Activated T-helper 2 cell treated with anti-CD3 and anti-CD28 coated beads, Interferon-gamma antibody, Interleukin-2, Interleukin-4, amounts not matched to agents 10 μg/mL and 5 μg/mL and 100 μg/mL, durations not matched to agents 14 hours and 24 hours and 36 hours (primary cell): ENCODE measurements at regions of chr19 and their contacts with region 1.

Region 1: DNA sequence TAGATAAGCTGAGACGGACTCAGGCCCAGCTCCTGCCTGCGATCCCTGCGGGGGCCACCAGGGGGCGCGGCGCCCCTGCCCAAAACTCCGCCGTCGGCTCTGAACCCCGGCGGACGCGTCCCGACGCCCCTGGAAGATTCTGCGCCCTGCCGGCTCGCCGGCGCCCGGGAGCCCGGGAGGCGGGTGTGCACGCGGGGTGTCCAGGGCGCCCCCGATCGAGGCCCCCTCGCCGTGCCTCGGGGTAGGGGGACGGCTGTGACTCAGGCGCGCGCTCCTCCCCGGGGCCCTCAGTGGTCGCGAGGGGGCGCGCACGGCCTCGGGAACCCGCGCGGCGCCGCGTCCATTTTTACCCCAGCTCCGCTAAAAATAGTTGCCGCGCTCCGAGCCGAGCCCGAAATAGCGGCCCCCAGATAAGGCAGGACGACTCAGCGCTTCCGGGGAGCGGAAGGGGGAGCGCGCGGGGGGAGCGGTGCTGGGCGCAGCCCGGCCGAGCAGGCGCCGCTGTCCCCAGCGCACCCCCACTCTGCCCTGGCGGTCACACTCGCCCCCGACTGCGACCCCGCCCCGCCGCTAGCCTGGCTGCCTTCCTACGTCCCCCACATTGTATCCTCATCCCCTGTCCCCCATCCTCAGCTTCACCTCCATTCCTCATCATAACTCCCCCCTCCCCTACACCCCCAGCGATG is 16.0 kb upstream of the ERCC1 start:
- DNase-seq: peak; percentile 78
- H3K4me3 Mint-ChIP-seq: peak overlapping the region; percentile 69
- H3K27ac Mint-ChIP-seq: peak overlapping the region; percentile 67
- H3K4me1 Mint-ChIP-seq: peaks cover 23% of the 10 kb centered on the region
- H3K27me3 Mint-ChIP-seq: peaks cover 2% of the 10 kb centered on the region

Region 2: DNA sequence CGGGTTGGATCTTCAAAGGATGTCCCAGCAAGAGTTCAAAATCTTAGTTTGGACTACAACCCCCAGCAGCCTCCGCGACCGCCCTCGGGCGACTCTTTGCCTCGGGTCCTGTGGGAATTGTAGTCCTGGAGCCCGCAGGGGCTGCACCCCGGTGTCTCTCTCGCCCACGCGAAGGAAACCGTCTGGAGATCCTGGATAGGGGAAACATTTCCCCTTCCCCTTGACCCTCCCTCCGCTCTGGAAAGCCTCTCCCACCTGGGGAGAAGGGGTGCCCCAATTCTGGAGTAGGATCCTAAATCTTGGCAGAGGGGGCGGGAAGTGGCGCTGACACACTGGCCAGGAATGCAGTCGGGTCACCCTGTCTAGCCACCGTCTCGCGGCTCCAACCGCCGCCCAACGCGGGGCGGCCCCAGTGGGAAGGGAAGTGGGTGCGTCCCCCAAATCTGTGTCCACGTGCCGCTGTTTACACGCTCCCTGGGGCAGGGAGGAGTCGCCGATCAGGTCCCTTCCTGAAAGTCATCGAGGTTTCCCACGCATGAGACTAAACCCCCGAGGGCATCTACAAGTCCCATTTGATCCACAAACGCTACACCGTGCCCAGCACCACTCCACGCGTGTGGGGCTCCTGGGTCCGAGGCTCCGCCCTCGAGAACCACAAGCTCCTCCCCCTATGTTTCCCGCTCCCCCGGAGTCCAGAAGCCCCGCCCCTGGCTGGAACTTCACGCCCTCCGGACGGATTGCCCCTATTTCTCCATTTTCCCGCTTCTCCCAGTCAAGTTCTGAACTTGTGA is 34.1 kb before region 1 on chr19:
- intact Hi-C with region 1: loop called (anchors 1 kb)
- DNase-seq: peak; percentile 77
- H3K4me3 Mint-ChIP-seq: peak overlapping the region; percentile 99
- H3K27ac Mint-ChIP-seq: peak overlapping the region; percentile 92
- H3K4me1 Mint-ChIP-seq: peaks cover 37% of the 10 kb centered on the region
- H3K27me3 Mint-ChIP-seq: peaks cover 11% of the 10 kb centered on the region

Region 3: GRCh38 chr19:45469132-45469944 is 29.6 kb after region 1 on chr19:
- intact Hi-C with region 1: loop called (anchors 2 kb)
- DNase-seq: peak; percentile 93
- H3K4me3 Mint-ChIP-seq: peak overlapping the region; percentile 86
- H3K27ac Mint-ChIP-seq: peak overlapping the region; percentile 91
- H3K4me1 Mint-ChIP-seq: peaks cover 23% of the 10 kb centered on the region
- H3K27me3 Mint-ChIP-seq: peaks cover 44% of the 10 kb centered on the region

Region 4: GRCh38 chr19:45485305-45486077 is 45.8 kb after region 1 on chr19:
- intact Hi-C with region 1: loop called (anchors 1 kb)
- DNase-seq: peak; percentile 95
- H3K4me3 Mint-ChIP-seq: peak overlapping the region; percentile 88
- H3K27ac Mint-ChIP-seq: peak overlapping the region; percentile 72
- H3K4me1 Mint-ChIP-seq: peaks cover 10% of the 10 kb centered on the region
- H3K27me3 Mint-ChIP-seq: peaks cover 2% of the 10 kb centered on the region